Naive thymus-derived CD4-positive, alpha-beta T cell (primary cell): ENCODE measurements at regions of chr2 and their contacts with region 1.

Region 1: DNA sequence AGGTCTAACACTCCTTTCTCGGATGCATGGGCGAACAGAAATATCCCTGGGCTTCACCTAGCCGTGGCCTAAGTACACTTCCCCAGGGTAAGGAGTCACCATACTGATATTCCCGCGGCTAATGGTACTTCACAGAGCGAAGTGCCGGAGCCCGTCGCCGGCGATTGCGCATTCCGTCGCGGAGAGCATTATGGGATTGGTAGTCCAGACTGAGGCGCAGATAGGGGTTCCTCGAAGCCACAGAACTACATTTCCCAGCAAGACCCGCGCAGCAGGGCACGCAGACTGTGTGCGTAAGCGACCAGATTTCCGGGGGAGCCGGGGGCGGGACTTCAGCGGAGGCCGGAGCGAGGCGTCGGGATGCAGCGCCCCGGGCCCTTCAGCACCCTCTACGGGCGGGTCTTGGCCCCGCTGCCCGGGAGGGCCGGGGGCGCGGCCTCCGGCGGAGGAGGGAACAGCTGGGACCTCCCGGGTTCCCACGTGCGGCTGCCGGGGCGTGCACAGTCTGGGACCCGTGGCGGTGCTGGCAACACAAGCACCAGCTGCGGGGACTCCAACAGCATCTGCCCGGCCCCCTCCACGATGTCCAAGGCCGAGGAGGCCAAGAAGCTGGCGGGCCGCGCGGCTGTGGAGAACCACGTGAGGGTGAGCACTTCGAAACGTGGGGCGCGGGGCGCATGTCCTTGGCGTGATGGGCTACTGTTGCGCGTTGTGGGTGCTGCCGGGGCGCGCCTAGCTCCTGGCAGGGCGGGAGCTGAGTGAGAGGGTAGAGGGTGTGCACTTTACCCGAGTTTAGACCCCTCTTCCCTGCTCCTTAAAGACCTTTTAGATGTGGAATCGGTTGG is at the start of gene RPIA:
- DNase-seq: peak; percentile 93 to 99 (median 98)
- ATAC-seq: peak; percentile 98
- H3K4me3 ChIP-seq: peak within 1 kb of the TSS; percentile 89
- H3K4me3 Mint-ChIP-seq: peak within 1 kb of the TSS; percentile 93 to 99 (median 98)
- H3K27ac ChIP-seq: peak within 1 kb of the TSS; percentile 83
- H3K27ac Mint-ChIP-seq: peak within 1 kb of the TSS; percentile 86 to 98 (median 94)
- H3K4me1 ChIP-seq: peaks cover 14 to 21% of the 10 kb centered on the region in 2 donors
- H3K4me1 Mint-ChIP-seq: peaks cover 24 to 70% (median 67%) of the 10 kb centered on the region in 7 donors
- H3K27me3 ChIP-seq: no peaks in the 10 kb centered on the region
- H3K27me3 Mint-ChIP-seq: no peaks in the 10 kb centered on the region
- total RNA-seq, gene RPIA: 16.4 to 38.4 (median 23.1) TPM

Region 2: DNA sequence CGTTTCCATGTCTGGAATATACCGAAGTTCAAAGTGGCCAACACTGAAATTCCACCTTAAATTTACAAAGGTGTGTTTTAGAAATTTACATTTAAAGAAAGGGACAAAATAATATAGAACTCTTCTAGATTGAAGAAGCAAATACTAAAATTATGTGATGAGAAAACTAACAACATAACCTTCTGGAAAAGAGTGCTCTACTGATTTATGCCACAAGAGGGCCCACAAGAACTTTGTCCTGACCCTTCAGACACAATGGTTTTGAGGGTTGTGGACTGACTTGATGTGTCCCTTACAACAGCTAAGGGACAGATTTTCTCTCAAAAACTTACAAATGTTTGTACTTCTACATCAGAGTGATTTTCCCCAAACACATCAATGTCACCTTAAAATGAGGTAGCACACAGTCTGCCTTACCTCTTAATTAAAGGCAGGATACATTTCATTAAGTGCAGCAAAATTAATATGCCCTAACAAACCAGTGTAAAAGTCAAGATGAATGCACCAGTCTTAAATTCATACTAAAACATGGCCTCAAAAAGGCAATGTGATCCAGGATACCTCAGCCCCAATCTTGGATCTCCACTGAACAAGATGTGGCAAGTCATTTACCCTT is 100.5 kb before region 1 on chr2:
- CTCF ChIA-PET with region 1: interaction called, 3 read pairs
- POLR2A ChIA-PET with region 1: no interaction called
- intact Hi-C with region 1: loop called (anchors 1 kb)
- DNase-seq: peak in 8 of 9 donors; percentile 19 to 56 (median 38)
- ATAC-seq: peak; percentile 87
- H3K4me3 ChIP-seq: no peak overlapping the region
- H3K4me3 Mint-ChIP-seq: no peak overlapping the region
- H3K27ac ChIP-seq: no peak overlapping the region
- H3K27ac Mint-ChIP-seq: peak overlapping the region in 3 of 9 donors; percentile 20 to 68 (median 47)
- H3K4me1 ChIP-seq: no peaks in the 10 kb centered on the region
- H3K4me1 Mint-ChIP-seq: peaks cover 0 to 3% (median 0%) of the 10 kb centered on the region in 7 donors
- H3K27me3 ChIP-seq: no peaks in the 10 kb centered on the region
- H3K27me3 Mint-ChIP-seq: no peaks in the 10 kb centered on the region

Region 3: GRCh38 chr2:88600038-88600465 is 91.5 kb before region 1 on chr2:
- CTCF ChIA-PET with region 1: no interaction called
- POLR2A ChIA-PET with region 1: no interaction called
- intact Hi-C with region 1: loop called in 1 of 2 experiments (anchors 1 kb)
- DNase-seq: peak in 7 of 9 donors; percentile 9 to 81 (median 28)
- ATAC-seq: peak; percentile 96
- H3K4me3 ChIP-seq: no peak overlapping the region
- H3K4me3 Mint-ChIP-seq: peak overlapping the region in 1 of 10 donors; percentile 40
- H3K27ac ChIP-seq: no peak overlapping the region
- H3K27ac Mint-ChIP-seq: peak overlapping the region in 7 of 9 donors; percentile 6 to 81 (median 31)
- H3K4me1 ChIP-seq: peaks cover 0 to 5% of the 10 kb centered on the region in 2 donors
- H3K4me1 Mint-ChIP-seq: peaks cover 26 to 63% (median 53%) of the 10 kb centered on the region in 7 donors
- H3K27me3 ChIP-seq: no peaks in the 10 kb centered on the region
- H3K27me3 Mint-ChIP-seq: no peaks in the 10 kb centered on the region

Region 4: DNA sequence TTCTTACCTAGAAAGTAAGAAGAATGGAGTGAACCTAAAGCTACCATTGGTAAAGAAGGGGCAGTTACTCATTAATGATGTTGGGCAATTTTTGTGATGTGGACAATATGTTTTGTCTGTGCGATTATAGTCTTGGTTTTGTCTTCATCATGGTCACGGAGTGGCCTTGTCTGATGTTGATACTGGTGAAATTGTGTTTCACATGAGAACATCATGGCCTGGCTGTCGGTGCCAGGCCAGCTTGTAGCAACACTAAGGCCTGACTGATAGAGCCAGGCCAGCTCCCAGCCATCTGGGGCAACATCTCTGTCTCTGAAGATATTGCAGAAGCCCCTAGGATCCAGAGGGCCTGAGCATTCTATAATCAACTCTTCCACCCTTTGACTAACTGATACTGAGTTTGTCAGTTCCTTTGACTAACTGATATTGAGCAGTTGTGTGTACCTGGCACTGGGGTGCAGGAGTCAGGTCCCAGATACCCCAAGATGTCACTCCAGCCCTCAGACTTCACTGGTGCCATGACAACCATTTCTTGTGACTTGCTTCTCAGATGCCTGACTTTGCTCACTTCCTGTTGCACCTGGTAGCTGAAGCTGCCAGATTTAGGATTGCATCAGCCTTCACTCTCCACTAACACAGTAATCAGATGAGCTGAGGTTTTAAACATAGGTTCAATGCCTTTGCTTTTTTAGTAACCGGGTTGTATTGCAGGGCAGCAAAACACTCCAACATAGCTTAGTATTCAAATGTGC is 62.4 kb after region 1 on chr2:
- CTCF ChIA-PET with region 1: no interaction called
- POLR2A ChIA-PET with region 1: interaction called, 13 read pairs
- intact Hi-C with region 1: loop called in 1 of 2 experiments (anchors 2 kb)
- DNase-seq: peak in 7 of 9 donors; percentile 61 to 85 (median 78)
- ATAC-seq: peak; percentile 79
- H3K4me3 ChIP-seq: peak overlapping the region; percentile 5
- H3K4me3 Mint-ChIP-seq: peak overlapping the region; percentile 33 to 87 (median 62)
- H3K27ac ChIP-seq: peak overlapping the region; percentile 84
- H3K27ac Mint-ChIP-seq: peak overlapping the region; percentile 90 to 100 (median 97)
- H3K4me1 ChIP-seq: peaks cover 0 to 60% of the 10 kb centered on the region in 2 donors
- H3K4me1 Mint-ChIP-seq: peaks cover 28 to 83% (median 70%) of the 10 kb centered on the region in 7 donors
- H3K27me3 ChIP-seq: no peaks in the 10 kb centered on the region
- H3K27me3 Mint-ChIP-seq: no peaks in the 10 kb centered on the region